ENCODE measurements at regions of chr20 and their contacts with region 1.

Region 1: GRCh38 chr20:45293041-45294002 is 13.3 kb upstream of the RBPJL start:
- DNase-seq: peak; percentile 66 to 80 (median 68)
- H3K4me3 ChIP-seq: peak overlapping the region; percentile 43
- H3K4me3 Mint-ChIP-seq: peak overlapping the region; percentile 65 to 86 (median 77)
- H3K27ac ChIP-seq: no peak overlapping the region
- H3K27ac Mint-ChIP-seq: peak overlapping the region in 2 of 8 donors; percentile 22 to 35
- H3K4me1 ChIP-seq: peaks cover 5% of the 10 kb centered on the region
- H3K4me1 Mint-ChIP-seq: peaks cover 8 to 23% (median 16%) of the 10 kb centered on the region in 3 donors
- H3K27me3 ChIP-seq: peaks cover 9% of the 10 kb centered on the region
- H3K27me3 Mint-ChIP-seq: peaks cover 42 to 45% of the 10 kb centered on the region in 2 donors

Region 2: GRCh38 chr20:45044084-45044573 is 249.2 kb before region 1 on chr20:
- CTCF ChIA-PET with region 1: interaction called, 23 read pairs
- POLR2A ChIA-PET with region 1: no interaction called
- DNase-seq: peak; percentile 9 to 62 (median 47)
- H3K4me3 ChIP-seq: no peak overlapping the region
- H3K4me3 Mint-ChIP-seq: no peak overlapping the region
- H3K27ac ChIP-seq: no peak overlapping the region
- H3K27ac Mint-ChIP-seq: peak overlapping the region; percentile 11 to 96 (median 53)
- H3K4me1 ChIP-seq: peaks cover 39% of the 10 kb centered on the region
- H3K4me1 Mint-ChIP-seq: peaks cover 67 to 84% (median 84%) of the 10 kb centered on the region in 3 donors
- H3K27me3 ChIP-seq: no peaks in the 10 kb centered on the region
- H3K27me3 Mint-ChIP-seq: no peaks in the 10 kb centered on the region

Region 3: DNA sequence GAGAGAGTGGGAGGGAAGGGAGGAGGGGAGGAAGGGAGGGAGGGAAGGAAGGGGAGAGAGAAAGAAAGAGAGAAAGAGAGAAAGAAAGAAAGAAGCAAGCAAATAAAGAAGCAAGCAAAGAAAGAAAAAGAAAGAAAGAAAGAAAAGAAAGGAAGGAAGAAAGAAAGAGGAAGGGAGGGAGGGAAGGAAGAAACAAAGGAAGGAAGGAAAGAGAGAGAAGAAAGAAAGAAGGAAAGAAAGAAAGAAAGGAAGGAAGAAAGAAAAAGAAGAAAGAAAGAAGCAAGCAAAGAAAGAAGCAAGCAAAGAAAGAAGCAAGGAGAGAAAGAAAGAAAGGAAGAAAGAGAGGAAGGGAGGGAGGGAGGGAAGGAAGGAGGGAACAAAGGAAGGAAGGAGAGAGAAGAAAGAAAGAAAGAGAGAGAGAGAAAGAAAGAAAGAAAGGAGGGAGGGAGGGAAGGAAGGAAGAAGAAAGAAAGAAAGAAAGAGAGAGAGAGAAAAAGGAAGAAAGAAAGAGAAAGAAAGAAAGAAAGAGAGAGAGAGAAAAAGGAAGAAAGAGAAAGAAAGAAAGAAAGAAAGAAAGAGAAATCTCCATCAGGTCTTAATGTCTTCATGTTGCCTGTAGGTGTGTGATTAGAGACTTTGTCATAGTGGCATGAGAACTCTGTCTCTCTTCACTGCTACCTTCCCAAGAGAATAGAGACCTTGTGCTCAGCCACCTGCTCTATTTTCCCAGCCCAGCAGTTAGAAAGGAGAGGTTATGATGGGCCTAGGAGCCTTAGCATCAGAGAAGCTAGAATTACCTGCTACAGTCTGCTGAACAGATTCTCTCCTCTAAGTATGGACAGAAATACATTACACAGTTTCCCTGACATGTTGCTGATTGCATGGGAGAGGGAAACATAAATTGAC is 81.5 kb before region 1 on chr20:
- CTCF ChIA-PET with region 1: no interaction called
- POLR2A ChIA-PET with region 1: no interaction called
- DNase-seq: no peak
- H3K4me3 ChIP-seq: no peak overlapping the region
- H3K4me3 Mint-ChIP-seq: no peak overlapping the region
- H3K27ac ChIP-seq: no peak overlapping the region
- H3K27ac Mint-ChIP-seq: no peak overlapping the region
- H3K4me1 ChIP-seq: no peaks in the 10 kb centered on the region
- H3K4me1 Mint-ChIP-seq: no peaks in the 10 kb centered on the region
- H3K27me3 ChIP-seq: no peaks in the 10 kb centered on the region
- H3K27me3 Mint-ChIP-seq: peaks cover 19 to 52% of the 10 kb centered on the region in 2 donors

Region 4: DNA sequence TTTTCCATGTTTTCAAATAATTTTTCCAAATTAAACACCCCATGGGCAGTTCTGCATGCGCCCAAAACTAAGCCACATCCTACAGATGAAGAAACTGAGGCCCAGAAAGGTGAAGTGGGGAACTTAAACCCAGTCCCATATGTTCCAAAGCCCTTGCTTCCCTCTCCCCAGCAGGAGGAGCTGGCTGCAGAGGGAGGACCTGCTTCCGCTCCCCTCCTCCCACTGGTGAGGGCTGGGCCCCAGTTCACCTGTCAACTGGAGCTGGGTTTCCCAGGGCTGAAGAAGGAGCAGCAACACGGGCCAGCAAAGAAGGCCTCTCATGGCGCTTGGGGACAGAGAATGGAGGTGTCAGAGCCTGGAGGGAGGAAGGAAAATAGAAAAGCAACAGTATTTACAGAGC is 11.9 kb after region 1 on chr20:
- CTCF ChIA-PET with region 1: interaction called, 26 read pairs
- POLR2A ChIA-PET with region 1: no interaction called
- DNase-seq: no peak
- H3K4me3 ChIP-seq: no peak overlapping the region
- H3K4me3 Mint-ChIP-seq: no peak overlapping the region
- H3K27ac ChIP-seq: no peak overlapping the region
- H3K27ac Mint-ChIP-seq: peak overlapping the region in 1 of 8 donors; percentile 83
- H3K4me1 ChIP-seq: no peaks in the 10 kb centered on the region
- H3K4me1 Mint-ChIP-seq: peaks cover 0 to 5% (median 5%) of the 10 kb centered on the region in 3 donors
- H3K27me3 ChIP-seq: no peaks in the 10 kb centered on the region
- H3K27me3 Mint-ChIP-seq: peaks cover 38 to 64% of the 10 kb centered on the region in 2 donors

Region 5: GRCh38 chr20:45311589-45312211 is 18.4 kb after region 1 on chr20:
- CTCF ChIA-PET with region 1: interaction called, 13 read pairs
- POLR2A ChIA-PET with region 1: no interaction called
- DNase-seq: peak; percentile 18 to 62 (median 25)
- H3K4me3 ChIP-seq: no peak overlapping the region
- H3K4me3 Mint-ChIP-seq: peak overlapping the region in 1 of 7 donors; percentile 72
- H3K27ac ChIP-seq: no peak overlapping the region
- H3K27ac Mint-ChIP-seq: no peak overlapping the region
- H3K4me1 ChIP-seq: no peaks in the 10 kb centered on the region
- H3K4me1 Mint-ChIP-seq: peaks cover 0 to 12% (median 11%) of the 10 kb centered on the region in 3 donors
- H3K27me3 ChIP-seq: peaks cover 2% of the 10 kb centered on the region
- H3K27me3 Mint-ChIP-seq: peaks cover 38 to 72% of the 10 kb centered on the region in 2 donors

Region 6: GRCh38 chr20:45383131-45383530 is 89.8 kb after region 1 on chr20:
- CTCF ChIA-PET with region 1: no interaction called
- POLR2A ChIA-PET with region 1: no interaction called
- DNase-seq: no peak
- H3K4me3 ChIP-seq: no peak overlapping the region
- H3K4me3 Mint-ChIP-seq: no peak overlapping the region
- H3K27ac ChIP-seq: no peak overlapping the region
- H3K27ac Mint-ChIP-seq: no peak overlapping the region
- H3K4me1 ChIP-seq: no peaks in the 10 kb centered on the region
- H3K4me1 Mint-ChIP-seq: no peaks in the 10 kb centered on the region
- H3K27me3 ChIP-seq: no peaks in the 10 kb centered on the region
- H3K27me3 Mint-ChIP-seq: no peaks in the 10 kb centered on the region